ENCODE measurements at regions of chr2 and their contacts with region 1.

Region 1: DNA sequence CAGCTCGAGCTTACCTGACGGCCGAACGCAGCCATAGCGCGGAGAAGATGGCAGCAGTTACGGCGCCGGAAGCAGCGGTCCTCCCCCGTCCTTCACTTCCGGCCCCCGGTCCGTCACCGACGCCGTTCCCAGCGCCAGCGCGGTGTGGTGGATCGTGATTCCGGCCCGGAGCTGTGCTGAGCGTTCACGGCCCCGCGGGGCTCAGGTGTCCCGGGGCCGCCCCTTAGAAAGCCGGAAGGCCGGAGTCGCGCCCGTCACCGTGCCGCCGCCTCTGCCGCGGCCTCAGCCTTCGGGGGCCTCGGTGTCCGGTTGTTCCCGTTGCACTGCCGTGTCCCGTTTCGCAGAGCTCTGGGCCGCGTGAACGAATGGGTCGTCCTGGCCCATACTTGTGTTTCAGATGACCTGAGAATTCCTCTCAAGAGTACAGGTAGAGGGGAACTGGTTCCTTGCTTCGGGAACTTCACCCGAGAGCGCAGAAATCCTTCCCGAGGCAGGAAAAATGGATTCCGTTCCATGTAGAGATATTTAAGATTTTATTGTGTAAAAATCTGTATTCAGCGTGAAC is at the start of gene MTERF4:
- DNase-seq: peak; percentile 88 to 95
- ATAC-seq: peak; percentile 98 to 99 (median 98)
- H3K4me3 ChIP-seq: peak within 1 kb of the TSS; percentile 81
- H3K27ac ChIP-seq: peak within 1 kb of the TSS; percentile 88
- H3K4me1 ChIP-seq: peaks cover 27% of the 10 kb centered on the region
- H3K27me3 ChIP-seq: no peaks in the 10 kb centered on the region
- CTCF ChIP-seq: no peak
- total RNA-seq, gene MTERF4: 27.3 to 39.0 (median 32.6) TPM

Region 2: GRCh38 chr2:241149925-241150659 is 47.8 kb after region 1 on chr2 and contains the start of gene PPP1R7:
- intact Hi-C with region 1: loop called (anchors 5 kb)
- DNase-seq: peak; percentile 95 to 97
- ATAC-seq: peak; percentile 95 to 97 (median 96)
- H3K4me3 ChIP-seq: peak within 1 kb of the TSS; percentile 96
- H3K27ac ChIP-seq: peak within 1 kb of the TSS; percentile 89
- H3K4me1 ChIP-seq: peaks cover 14% of the 10 kb centered on the region
- H3K27me3 ChIP-seq: peaks cover 0 to 4% (median 0%) of the 10 kb centered on the region in 3 donors
- CTCF ChIP-seq: no peak
- total RNA-seq, gene PPP1R7: 71.3 to 80.8 (median 72.2) TPM

Region 3: DNA sequence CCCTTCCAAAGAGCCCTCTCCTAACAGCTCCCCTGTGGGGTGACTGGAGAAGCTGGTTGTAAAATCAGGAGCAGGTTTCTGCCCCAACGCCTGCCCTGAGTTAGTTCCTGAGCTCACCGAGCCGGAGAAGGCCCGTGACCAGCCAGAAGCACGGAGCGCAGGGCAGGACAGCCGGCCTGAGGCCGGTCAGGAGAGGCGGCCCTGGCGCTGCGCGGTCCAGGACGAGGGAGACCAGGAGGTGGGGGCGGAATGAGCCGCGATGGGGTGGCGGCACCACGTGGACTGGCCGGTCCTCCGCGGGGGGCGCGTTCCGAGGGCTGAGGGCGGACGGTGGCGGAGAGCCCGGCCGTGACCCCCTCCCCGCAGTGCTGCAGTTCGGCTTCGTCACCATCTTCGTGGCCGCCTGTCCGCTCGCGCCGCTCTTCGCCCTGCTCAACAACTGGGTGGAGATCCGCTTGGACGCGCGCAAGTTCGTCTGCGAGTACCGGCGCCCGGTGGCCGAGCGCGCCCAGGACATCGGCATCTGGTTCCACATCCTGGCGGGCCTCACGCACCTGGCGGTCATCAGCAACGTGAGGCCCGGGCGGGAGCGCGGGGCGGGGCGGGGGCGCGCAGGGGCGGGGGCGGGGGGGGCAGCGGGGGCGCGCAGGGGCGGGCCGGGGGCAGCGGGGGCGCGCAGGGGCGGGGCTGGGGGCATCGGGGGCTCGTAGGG is 115.2 kb after region 1 on chr2:
- intact Hi-C with region 1: loop called in 1 of 2 experiments (anchors 5 kb)
- DNase-seq: peak; percentile 74 to 88
- ATAC-seq: peak; percentile 76 to 86 (median 80)
- H3K4me3 ChIP-seq: peak overlapping the region; percentile 63
- H3K27ac ChIP-seq: peak overlapping the region; percentile 73
- H3K4me1 ChIP-seq: peaks cover 7% of the 10 kb centered on the region
- H3K27me3 ChIP-seq: no peaks in the 10 kb centered on the region
- CTCF ChIP-seq: no peak